OCI-LY7 (cell line): ENCODE measurements at regions of chr5 and their contacts with region 1.

Region 1: DNA sequence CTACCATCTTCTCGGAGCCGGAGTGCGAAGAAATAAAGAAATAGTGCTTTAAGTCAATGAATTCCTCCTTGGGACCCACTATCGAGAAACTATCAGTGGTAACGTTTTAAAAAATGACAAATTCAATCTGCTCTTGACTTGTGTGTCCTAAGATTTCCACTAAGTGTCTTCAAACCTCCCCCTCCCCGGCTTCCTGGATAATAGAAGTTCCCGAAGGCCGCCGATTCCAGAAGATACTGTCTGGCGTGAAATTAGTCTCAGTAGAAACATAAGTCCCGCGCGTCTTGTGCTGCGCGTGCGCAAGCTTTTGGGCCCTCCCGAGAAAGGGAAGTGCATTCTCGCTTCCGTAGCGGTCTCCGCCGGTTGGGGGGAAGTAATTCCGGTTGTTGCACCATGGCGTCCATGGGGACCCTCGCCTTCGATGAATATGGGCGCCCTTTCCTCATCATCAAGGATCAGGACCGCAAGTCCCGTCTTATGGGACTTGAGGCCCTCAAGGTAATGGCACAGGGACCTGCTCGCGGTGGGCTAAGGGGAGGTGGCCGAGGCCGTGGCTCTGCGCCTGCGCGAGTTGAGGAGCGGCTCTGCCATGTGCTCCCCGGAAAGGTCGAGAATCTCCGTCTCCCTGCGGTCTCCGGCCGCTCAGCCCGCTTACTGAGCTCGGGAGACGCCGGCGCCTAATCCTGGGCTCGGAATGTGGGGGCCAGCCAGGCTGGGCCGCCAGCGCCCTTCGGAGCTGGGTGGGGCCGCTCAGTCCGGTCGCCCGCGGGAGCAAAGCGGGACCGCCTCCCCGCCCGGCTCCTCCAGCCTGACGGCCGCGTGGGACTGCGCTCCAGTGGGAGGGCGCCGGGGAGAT is at the start of gene CCT5:
- DNase-seq: peak; percentile 99
- H3K4me3 ChIP-seq: peak within 1 kb of the TSS; percentile 96
- H3K27ac ChIP-seq: peak within 1 kb of the TSS; percentile 72
- H3K4me1 ChIP-seq: peaks cover 35% of the 10 kb centered on the region
- CTCF ChIP-seq: no peak
- total RNA-seq, gene CCT5: 498 and 551 TPM in 2 replicates

Region 2: DNA sequence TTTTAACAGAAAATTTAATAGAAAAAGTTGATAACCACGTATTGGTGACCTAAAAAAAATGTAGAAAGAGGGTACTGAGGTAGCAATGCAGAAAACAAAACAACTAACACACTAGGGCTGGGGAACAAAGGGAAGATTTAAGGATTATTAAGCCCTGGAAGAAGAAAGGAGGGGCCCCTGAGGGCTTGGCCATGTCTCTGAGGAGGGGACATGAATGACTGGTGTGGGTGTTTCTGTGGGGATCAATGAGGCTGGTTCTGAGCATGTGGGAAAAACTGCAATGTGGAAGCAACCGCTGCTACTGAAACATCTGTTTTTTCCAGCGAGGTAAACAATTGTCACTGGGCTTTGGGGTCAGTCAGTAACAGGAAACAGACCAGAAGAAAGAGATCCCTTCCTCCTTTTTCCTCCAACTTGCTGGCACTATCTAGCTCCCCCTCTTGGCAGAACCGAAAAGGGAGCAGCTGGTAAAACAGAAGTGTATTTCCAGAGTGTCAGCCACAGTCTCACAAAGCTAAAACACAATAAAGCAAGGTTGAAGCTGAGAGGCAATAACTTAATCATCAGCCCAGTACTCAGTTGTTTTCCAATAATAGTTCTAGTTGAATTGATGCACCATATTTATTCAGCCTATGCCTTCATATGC is 48.8 kb before region 1 on chr5:
- CTCF ChIA-PET with region 1: no interaction called
- POLR2A ChIA-PET with region 1: no interaction called
- intact Hi-C with region 1: no loop called
- DNase-seq: no peak
- H3K4me3 ChIP-seq: no peak overlapping the region
- H3K27ac ChIP-seq: no peak overlapping the region
- H3K4me1 ChIP-seq: no peaks in the 10 kb centered on the region
- CTCF ChIP-seq: peak; percentile 69

Region 3: GRCh38 chr5:10277773-10278630 is 27.8 kb after region 1 on chr5:
- CTCF ChIA-PET with region 1: no interaction called
- POLR2A ChIA-PET with region 1: no interaction called
- intact Hi-C with region 1: no loop called
- DNase-seq: no peak
- H3K4me3 ChIP-seq: no peak overlapping the region
- H3K27ac ChIP-seq: no peak overlapping the region
- H3K4me1 ChIP-seq: no peaks in the 10 kb centered on the region
- CTCF ChIP-seq: no peak

Region 4: GRCh38 chr5:10761166-10761932 is 511.2 kb after region 1 on chr5 and contains the start of gene DAP:
- CTCF ChIA-PET with region 1: no interaction called
- POLR2A ChIA-PET with region 1: no interaction called
- intact Hi-C with region 1: loop called (anchors 1 kb)
- DNase-seq: peak; percentile 95
- H3K4me3 ChIP-seq: peak within 1 kb of the TSS; percentile 85
- H3K27ac ChIP-seq: peak within 1 kb of the TSS; percentile 75
- H3K4me1 ChIP-seq: peaks cover 44% of the 10 kb centered on the region
- CTCF ChIP-seq: no peak
- total RNA-seq, gene DAP: 15.9 and 21.5 TPM in 2 replicates